Heart left ventricle (tissue), 16 donors: ENCODE measurements at regions of chr20 and their contacts with region 1.

Region 1: DNA sequence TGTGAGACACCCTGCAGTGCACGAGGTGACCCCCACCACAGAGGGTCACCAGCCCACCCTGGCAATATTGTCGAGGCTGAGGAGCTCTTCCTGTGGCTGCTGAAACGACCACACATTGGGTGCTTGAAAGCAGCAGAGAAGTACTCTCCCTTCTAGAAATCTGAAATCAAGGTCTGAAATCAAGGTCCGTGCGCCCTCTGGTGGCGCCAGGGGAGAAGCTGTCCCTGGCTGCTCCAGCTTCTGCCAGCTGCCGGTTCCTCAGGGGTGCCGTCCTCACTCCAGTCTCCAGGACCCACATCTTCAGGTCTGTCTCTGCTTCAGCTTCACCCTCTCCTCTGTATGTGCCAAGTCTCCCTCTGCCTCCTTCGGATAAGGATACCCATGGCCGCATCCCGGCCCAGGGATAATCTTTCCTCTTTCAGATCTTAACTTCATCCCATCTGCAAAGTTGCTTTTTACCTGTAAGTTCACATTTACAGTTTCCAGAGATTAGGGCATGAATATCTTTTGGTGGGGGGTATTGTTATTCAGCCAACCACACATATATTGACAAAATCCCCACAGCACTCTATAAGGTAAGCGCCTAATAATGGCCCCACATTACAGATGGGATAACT is 108.3 kb upstream of the PHACTR3 start:
- DNase-seq: peak; percentile 50 to 77 (median 62)
- ATAC-seq: peak in 3 of 4 donors; percentile 56 to 64 (median 60)
- H3K4me3 ChIP-seq: no peak overlapping the region
- H3K27ac ChIP-seq: no peak overlapping the region
- H3K4me1 ChIP-seq: peaks cover 0 to 5% (median 0%) of the 10 kb centered on the region in 12 donors
- H3K27me3 ChIP-seq: peaks cover 0 to 40% (median 8%) of the 10 kb centered on the region in 9 donors
- CTCF ChIP-seq: peak; percentile 74 to 90 (median 84)
- POLR2A ChIP-seq: no peak

Region 2: GRCh38 chr20:59232618-59233017 is 263.4 kb before region 1 on chr20:
- intact Hi-C with region 1: loop called in 2 of 10 experiments (anchors 10 kb)
- DNase-seq: no peak
- ATAC-seq: no peak
- H3K4me3 ChIP-seq: no peak overlapping the region
- H3K27ac ChIP-seq: no peak overlapping the region
- H3K4me1 ChIP-seq: no peaks in the 10 kb centered on the region
- H3K27me3 ChIP-seq: peaks cover 0 to 46% (median 14%) of the 10 kb centered on the region in 9 donors
- CTCF ChIP-seq: no peak
- POLR2A ChIP-seq: no peak

Region 3: DNA sequence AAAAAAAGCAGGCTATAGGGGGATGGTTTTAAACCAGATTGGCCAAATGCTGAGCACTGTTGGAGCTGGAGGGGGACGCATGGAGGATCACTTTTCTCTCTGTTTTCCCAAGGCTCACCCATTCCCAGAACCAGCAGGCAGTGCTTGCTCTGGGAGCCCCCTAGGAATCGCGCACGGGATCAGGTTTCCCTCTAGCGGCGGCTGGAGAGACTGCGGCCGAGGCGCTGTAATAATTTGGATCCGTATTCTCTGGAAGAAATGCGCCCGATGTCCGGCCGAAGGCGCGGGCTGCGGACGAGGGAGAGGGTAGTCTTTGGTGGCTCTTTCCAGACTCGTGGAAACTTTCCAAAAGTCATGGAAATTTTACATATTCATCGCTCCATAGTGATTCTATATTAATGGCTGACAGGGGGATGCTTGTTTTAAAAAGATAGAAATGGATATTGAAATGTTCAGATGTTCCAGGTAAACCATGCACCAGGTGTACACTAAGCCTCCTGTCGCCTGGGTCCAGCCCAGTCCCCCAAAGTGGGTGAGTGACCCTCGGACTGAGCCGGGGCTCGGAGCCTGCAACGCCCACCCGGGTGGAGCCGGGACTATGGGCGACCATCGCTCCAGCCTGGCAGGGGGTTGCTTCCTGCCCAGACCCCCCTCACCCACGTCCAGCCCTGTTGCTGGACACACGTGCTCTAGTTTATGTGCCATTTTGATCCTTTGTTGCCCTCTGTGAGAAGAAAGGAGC is 29.7 kb after region 1 on chr20:
- intact Hi-C with region 1: no loop called
- DNase-seq: peak; percentile 32 to 70 (median 53)
- ATAC-seq: peak in 3 of 4 donors; percentile 71 to 89 (median 75)
- H3K4me3 ChIP-seq: no peak overlapping the region
- H3K27ac ChIP-seq: no peak overlapping the region
- H3K4me1 ChIP-seq: peaks cover 0 to 9% (median 0%) of the 10 kb centered on the region in 12 donors
- H3K27me3 ChIP-seq: peaks cover 0 to 79% (median 27%) of the 10 kb centered on the region in 9 donors
- CTCF ChIP-seq: peak; percentile 66 to 92 (median 80)
- POLR2A ChIP-seq: no peak

Region 4: GRCh38 chr20:59678288-59678687 is 182.3 kb after region 1 on chr20:
- intact Hi-C with region 1: no loop called
- DNase-seq: no peak
- ATAC-seq: no peak
- H3K4me3 ChIP-seq: no peak overlapping the region
- H3K27ac ChIP-seq: no peak overlapping the region
- H3K4me1 ChIP-seq: peaks cover 0 to 20% (median 0%) of the 10 kb centered on the region in 12 donors
- H3K27me3 ChIP-seq: peaks cover 0 to 29% (median 5%) of the 10 kb centered on the region in 9 donors
- CTCF ChIP-seq: no peak
- POLR2A ChIP-seq: no peak

Region 5: GRCh38 chr20:59884494-59884893 is 388.5 kb after region 1 on chr20:
- intact Hi-C with region 1: no loop called
- DNase-seq: no peak
- ATAC-seq: no peak
- H3K4me3 ChIP-seq: no peak overlapping the region
- H3K27ac ChIP-seq: no peak overlapping the region
- H3K4me1 ChIP-seq: no peaks in the 10 kb centered on the region
- H3K27me3 ChIP-seq: no peaks in the 10 kb centered on the region
- CTCF ChIP-seq: no peak
- POLR2A ChIP-seq: no peak